PC-3 (cell line): ENCODE measurements at regions of chr12 and their contacts with region 1.

Region 1: GRCh38 chr12:48021485-48022179 is 17.4 kb upstream of the COL2A1 start:
- DNase-seq: peak; percentile 98
- ATAC-seq: peak; percentile 93
- H3K4me3 ChIP-seq: no peak overlapping the region
- H3K27ac ChIP-seq: peak overlapping the region; percentile 72
- H3K4me1 ChIP-seq: peaks cover 33% of the 10 kb centered on the region
- H3K27me3 ChIP-seq: no peaks in the 10 kb centered on the region
- CTCF ChIP-seq: no peak

Region 2: GRCh38 chr12:48001505-48002413 is 19.9 kb before region 1 on chr12:
- CTCF ChIA-PET with region 1: no interaction called
- POLR2A ChIA-PET with region 1: no interaction called
- intact Hi-C with region 1: loop called (anchors 2 kb)
- DNase-seq: peak; percentile 58
- ATAC-seq: peak; percentile 78
- H3K4me3 ChIP-seq: peak overlapping the region; percentile 72
- H3K27ac ChIP-seq: peak overlapping the region; percentile 51
- H3K4me1 ChIP-seq: peaks cover 45% of the 10 kb centered on the region
- H3K27me3 ChIP-seq: peaks cover 37% of the 10 kb centered on the region
- CTCF ChIP-seq: no peak

Region 3: DNA sequence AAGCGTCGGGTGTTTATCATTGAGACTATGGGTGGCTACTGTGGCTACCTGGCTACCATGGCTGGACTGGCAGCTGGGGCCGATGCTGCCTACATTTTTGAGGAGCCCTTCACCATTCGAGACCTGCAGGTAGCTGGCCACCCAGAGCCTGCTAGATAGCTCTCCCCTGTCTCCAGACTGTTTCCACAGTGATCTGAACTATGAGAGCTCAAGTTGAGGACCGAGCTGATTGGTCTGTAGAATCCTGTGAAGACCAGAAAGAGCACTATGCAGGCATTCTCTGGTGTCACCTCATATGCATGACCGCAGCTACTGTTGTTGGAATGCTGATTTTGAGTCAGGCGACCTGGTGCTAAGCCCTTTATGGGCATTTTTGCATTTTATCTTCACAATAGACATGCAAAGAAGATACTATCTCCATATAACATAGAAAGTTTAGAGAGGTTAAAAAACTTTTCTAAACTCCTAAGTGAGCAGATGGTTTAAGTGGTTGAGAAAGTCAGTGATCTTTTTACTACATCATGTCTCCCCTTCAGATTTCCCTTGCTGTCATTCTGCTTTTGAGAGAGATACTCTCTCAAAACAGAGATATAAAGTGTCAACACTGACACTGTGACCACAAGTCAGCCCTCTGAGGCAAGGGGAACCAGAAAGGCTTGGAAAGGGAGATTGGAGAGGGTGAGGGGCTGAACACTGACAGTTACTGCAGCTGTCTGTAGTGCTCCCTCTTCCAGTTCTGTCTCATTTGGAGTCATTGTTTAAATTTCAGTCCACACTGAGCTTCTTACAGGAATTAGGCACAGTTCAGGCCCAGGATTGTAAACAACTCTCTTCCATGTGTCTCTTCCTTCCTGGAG is 121.4 kb after region 1 on chr12:
- CTCF ChIA-PET with region 1: no interaction called
- POLR2A ChIA-PET with region 1: no interaction called
- intact Hi-C with region 1: no loop called
- DNase-seq: no peak
- ATAC-seq: no peak
- H3K4me3 ChIP-seq: no peak overlapping the region
- H3K27ac ChIP-seq: no peak overlapping the region
- H3K4me1 ChIP-seq: no peaks in the 10 kb centered on the region
- H3K27me3 ChIP-seq: no peaks in the 10 kb centered on the region
- CTCF ChIP-seq: no peak